MCF 10A (cell line): ENCODE measurements at regions of chr1 and their contacts with region 1.

Region 1: DNA sequence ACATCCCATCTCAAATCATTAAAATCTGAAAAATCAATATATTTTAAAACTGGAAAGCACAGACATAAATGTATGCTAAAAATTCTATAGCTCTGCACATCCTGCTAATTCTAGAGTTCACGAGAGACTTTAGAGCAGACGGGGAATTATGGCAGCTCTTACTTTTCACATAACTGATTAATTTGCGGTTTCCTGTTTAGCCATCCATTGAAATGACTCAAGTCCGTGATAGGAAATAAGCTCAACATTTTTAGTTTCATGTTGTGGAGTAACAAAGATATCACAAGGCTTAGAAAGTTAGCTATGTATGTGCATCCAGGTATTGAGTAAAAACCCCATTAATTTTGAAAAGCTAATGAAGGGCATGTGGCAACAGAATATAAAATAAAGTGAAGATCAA is 123.2 kb downstream of the SMYD2 start:
- DNase-seq: peak; percentile 40
- H3K4me3 Mint-ChIP-seq: no peak overlapping the region
- H3K27ac Mint-ChIP-seq: peak overlapping the region; percentile 20
- H3K4me1 Mint-ChIP-seq: peaks cover 24% of the 10 kb centered on the region
- H3K27me3 Mint-ChIP-seq: no peaks in the 10 kb centered on the region
- CTCF ChIP-seq: no peak

Region 2: GRCh38 chr1:214386747-214387146 is 17.4 kb before region 1 on chr1:
- CTCF ChIA-PET with region 1: interaction called, 11 read pairs
- POLR2A ChIA-PET with region 1: interaction called, 46 read pairs
- intact Hi-C with region 1: no loop called
- DNase-seq: peak; percentile 83
- H3K4me3 Mint-ChIP-seq: no peak overlapping the region
- H3K27ac Mint-ChIP-seq: peak overlapping the region; percentile 76
- H3K4me1 Mint-ChIP-seq: peaks cover 14% of the 10 kb centered on the region
- H3K27me3 Mint-ChIP-seq: no peaks in the 10 kb centered on the region
- CTCF ChIP-seq: no peak

Region 3: GRCh38 chr1:214685906-214686305 is 281.8 kb after region 1 on chr1:
- CTCF ChIA-PET with region 1: no interaction called
- POLR2A ChIA-PET with region 1: no interaction called
- intact Hi-C with region 1: no loop called
- DNase-seq: no peak
- H3K4me3 Mint-ChIP-seq: no peak overlapping the region
- H3K27ac Mint-ChIP-seq: no peak overlapping the region
- H3K4me1 Mint-ChIP-seq: no peaks in the 10 kb centered on the region
- H3K27me3 Mint-ChIP-seq: no peaks in the 10 kb centered on the region
- CTCF ChIP-seq: no peak